Right cardiac atrium (tissue), 5 donors: ENCODE measurements at regions of chr14 and their contacts with region 1.

Region 1: GRCh38 chr14:95993768-95994592 is 45.2 kb upstream of the C14orf132 start:
- DNase-seq: no peak
- ATAC-seq: peak; percentile 19 to 44
- H3K4me3 ChIP-seq: no peak overlapping the region
- H3K27ac ChIP-seq: no peak overlapping the region
- H3K4me1 ChIP-seq: no peaks in the 10 kb centered on the region
- H3K27me3 ChIP-seq: no peaks in the 10 kb centered on the region

Region 2: GRCh38 chr14:94689218-94689984 is 1304.6 kb before region 1 on chr14:
- intact Hi-C with region 1: loop called in 1 of 4 experiments (anchors 10 kb)
- DNase-seq: peak; percentile 61 to 88 (median 86)
- ATAC-seq: peak; percentile 94
- H3K4me3 ChIP-seq: no peak overlapping the region
- H3K27ac ChIP-seq: no peak overlapping the region
- H3K4me1 ChIP-seq: no peaks in the 10 kb centered on the region
- H3K27me3 ChIP-seq: no peaks in the 10 kb centered on the region

Region 3: GRCh38 chr14:95442633-95443021 is 551.4 kb before region 1 on chr14:
- intact Hi-C with region 1: loop called in 1 of 4 experiments (anchors 10 kb)
- DNase-seq: peak; percentile 87 to 95 (median 89)
- ATAC-seq: peak; percentile 95
- H3K4me3 ChIP-seq: no peak overlapping the region
- H3K27ac ChIP-seq: no peak overlapping the region
- H3K4me1 ChIP-seq: no peaks in the 10 kb centered on the region
- H3K27me3 ChIP-seq: no peaks in the 10 kb centered on the region

Region 4: GRCh38 chr14:95561001-95561412 is 433.0 kb before region 1 on chr14:
- intact Hi-C with region 1: loop called (anchors 2 to 5 kb)
- DNase-seq: peak; percentile 75 to 93 (median 83)
- ATAC-seq: peak; percentile 76 to 87
- H3K4me3 ChIP-seq: no peak overlapping the region
- H3K27ac ChIP-seq: no peak overlapping the region
- H3K4me1 ChIP-seq: no peaks in the 10 kb centered on the region
- H3K27me3 ChIP-seq: no peaks in the 10 kb centered on the region

Region 5: DNA sequence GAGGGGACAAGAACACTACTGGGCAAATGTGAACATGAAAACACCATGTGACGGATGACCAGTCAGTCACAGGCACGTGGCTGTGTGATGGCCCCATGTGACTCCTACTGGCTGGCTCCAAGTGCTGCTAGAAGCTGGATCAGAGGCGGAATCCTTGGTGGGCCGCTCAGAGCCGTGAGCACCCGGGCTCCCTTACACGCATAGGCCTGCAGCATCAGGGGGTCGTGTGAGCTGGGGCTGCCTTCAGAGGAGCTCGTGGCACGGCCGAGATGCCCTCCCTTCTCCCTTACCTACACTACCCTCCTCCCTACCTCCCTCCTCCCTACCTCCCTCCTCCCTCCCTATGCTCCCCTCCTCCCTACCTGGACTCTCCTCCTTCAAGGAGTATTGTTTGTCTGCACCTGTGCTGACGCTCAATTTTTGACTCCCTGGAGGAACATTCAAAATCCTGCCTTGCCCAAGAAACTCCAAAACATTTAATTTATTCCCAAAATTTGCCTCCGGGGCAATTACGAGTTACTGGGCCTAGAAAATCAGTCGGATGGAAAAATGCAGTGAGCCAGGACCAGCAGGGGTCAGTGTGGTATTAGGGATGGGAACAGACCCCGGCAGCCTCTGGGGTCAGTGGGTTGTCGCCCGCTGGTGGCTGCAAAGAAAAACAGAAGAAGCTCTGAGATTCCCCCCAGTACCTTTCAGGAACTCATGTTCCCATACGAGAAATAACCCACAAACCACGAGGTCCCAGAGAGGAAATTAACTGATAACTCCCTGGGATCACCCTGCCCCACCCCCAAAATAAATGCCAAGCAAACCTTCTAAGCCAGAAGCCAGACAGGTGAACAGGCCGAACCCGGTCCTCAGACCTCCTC is 106.4 kb after region 1 on chr14:
- intact Hi-C with region 1: loop called in 1 of 4 experiments (anchors 10 kb)
- DNase-seq: peak; percentile 70 to 87 (median 79)
- ATAC-seq: peak; percentile 54 to 64
- H3K4me3 ChIP-seq: no peak overlapping the region
- H3K27ac ChIP-seq: no peak overlapping the region
- H3K4me1 ChIP-seq: no peaks in the 10 kb centered on the region
- H3K27me3 ChIP-seq: no peaks in the 10 kb centered on the region

Region 6: GRCh38 chr14:96275177-96276112 is 281.5 kb after region 1 on chr14:
- intact Hi-C with region 1: loop called in 2 of 4 experiments (anchors 5 to 10 kb)
- DNase-seq: peak; percentile 70 to 86 (median 86)
- ATAC-seq: peak; percentile 55 to 58
- H3K4me3 ChIP-seq: no peak overlapping the region
- H3K27ac ChIP-seq: no peak overlapping the region
- H3K4me1 ChIP-seq: no peaks in the 10 kb centered on the region
- H3K27me3 ChIP-seq: no peaks in the 10 kb centered on the region

Region 7: DNA sequence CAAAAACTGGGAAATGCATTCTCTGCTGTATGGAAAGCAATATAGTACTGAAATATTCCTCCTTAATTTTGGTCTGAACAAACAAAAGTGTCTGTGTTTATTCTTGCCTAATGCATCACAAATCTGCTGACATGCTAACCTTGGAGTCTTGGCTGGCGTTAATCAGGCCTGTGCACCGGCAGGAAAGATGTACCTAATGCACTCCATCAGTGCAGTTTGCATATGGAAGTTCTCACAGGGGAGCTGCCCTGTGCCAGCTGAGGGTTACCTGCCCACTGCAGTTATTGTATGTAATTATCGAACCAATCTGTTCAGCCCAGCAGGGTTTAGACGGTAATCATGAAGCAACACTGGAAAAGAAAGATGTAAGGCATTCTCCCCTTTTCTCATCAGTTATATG is 880.1 kb after region 1 on chr14:
- intact Hi-C with region 1: no loop called
- DNase-seq: no peak
- ATAC-seq: no peak
- H3K4me3 ChIP-seq: no peak overlapping the region
- H3K27ac ChIP-seq: no peak overlapping the region
- H3K4me1 ChIP-seq: no peaks in the 10 kb centered on the region
- H3K27me3 ChIP-seq: no peaks in the 10 kb centered on the region